ENCODE measurements at regions of chr11 and their contacts with region 1.

Region 1: GRCh38 chr11:86456052-86456939 is 81.6 kb downstream of the CCDC81 start:
- DNase-seq: peak; percentile 56
- H3K4me3 Mint-ChIP-seq: no peak overlapping the region
- H3K27ac Mint-ChIP-seq: no peak overlapping the region
- H3K4me1 Mint-ChIP-seq: peaks cover 27% of the 10 kb centered on the region
- H3K27me3 Mint-ChIP-seq: no peaks in the 10 kb centered on the region

Region 2: GRCh38 chr11:85854557-85855340 is 601.5 kb before region 1 on chr11:
- intact Hi-C with region 1: loop called (anchors 2 kb)
- DNase-seq: peak; percentile 87
- H3K4me3 Mint-ChIP-seq: peak overlapping the region; percentile 84
- H3K27ac Mint-ChIP-seq: peak overlapping the region; percentile 90
- H3K4me1 Mint-ChIP-seq: peaks cover 13% of the 10 kb centered on the region
- H3K27me3 Mint-ChIP-seq: peaks cover 3% of the 10 kb centered on the region

Region 3: DNA sequence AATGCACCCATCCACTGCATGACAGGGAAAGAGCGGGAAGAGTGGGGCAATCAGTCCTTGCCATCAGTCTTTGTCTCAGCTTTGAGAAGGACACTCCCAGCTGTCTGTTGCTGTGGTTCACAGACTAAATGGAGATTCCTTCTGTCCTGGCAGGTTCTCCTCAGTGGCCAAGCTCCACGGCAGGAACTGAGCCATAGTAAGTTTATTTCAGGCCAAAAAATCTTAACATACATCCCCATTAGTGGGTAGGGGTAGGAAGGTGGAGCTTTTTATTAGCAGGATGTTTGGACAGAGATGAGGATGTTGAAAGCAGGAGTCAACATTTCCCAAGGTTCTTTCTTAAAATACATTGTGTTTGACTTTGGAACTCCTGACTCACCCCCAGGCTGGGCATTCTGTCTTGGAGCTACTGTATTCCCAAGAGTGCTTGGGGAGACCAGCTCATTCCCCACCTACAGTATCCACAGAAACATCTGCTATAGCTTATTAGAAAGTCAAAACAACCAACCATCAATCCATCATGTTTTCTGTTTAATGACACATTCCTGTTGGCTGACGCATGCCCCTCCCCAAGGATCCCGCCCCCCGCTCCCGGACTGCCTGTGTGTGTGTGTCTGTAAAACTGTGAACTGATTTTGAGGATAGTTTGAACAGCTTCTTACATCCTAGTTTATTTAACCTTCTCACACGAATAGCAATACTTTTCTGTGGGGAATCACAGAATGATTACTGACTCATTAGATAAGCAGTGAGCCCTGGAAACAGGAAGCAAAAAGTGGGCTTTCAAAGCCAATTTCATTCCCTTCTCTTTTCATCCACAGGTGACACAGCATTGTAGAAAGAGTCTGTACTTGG is 27.9 kb after region 1 on chr11:
- intact Hi-C with region 1: no loop called
- DNase-seq: no peak
- H3K4me3 Mint-ChIP-seq: no peak overlapping the region
- H3K27ac Mint-ChIP-seq: no peak overlapping the region
- H3K4me1 Mint-ChIP-seq: peaks cover 4% of the 10 kb centered on the region
- H3K27me3 Mint-ChIP-seq: peaks cover 2% of the 10 kb centered on the region

Region 4: DNA sequence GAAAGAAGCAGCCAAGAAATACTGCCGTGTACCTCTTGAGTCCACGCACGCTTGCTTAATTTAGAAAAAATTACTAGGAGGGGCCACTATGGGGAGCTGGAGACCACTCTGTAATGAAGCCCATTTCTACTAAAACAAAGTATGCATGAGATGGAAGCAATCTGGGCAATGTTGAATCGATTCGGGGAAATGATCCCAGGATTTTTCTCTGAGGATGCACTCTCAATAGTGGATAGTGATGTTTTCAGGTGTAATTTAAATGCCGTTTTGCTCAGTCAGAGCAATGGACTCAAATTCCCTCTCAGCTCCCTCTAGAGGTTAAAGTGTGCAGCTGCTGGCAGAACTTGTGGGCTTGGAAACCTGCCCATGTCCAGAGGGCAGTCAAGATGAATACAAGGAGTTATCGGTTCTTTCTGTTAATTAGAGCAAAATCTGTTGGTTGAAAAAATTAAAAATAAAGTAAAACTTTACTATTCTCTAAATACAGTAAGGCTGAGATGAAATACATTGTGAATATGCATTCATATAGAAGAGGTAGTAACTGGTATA is 152.0 kb after region 1 on chr11:
- intact Hi-C with region 1: loop called (anchors 1 kb)
- DNase-seq: no peak
- H3K4me3 Mint-ChIP-seq: no peak overlapping the region
- H3K27ac Mint-ChIP-seq: no peak overlapping the region
- H3K4me1 Mint-ChIP-seq: peaks cover 8% of the 10 kb centered on the region
- H3K27me3 Mint-ChIP-seq: no peaks in the 10 kb centered on the region

Region 5: DNA sequence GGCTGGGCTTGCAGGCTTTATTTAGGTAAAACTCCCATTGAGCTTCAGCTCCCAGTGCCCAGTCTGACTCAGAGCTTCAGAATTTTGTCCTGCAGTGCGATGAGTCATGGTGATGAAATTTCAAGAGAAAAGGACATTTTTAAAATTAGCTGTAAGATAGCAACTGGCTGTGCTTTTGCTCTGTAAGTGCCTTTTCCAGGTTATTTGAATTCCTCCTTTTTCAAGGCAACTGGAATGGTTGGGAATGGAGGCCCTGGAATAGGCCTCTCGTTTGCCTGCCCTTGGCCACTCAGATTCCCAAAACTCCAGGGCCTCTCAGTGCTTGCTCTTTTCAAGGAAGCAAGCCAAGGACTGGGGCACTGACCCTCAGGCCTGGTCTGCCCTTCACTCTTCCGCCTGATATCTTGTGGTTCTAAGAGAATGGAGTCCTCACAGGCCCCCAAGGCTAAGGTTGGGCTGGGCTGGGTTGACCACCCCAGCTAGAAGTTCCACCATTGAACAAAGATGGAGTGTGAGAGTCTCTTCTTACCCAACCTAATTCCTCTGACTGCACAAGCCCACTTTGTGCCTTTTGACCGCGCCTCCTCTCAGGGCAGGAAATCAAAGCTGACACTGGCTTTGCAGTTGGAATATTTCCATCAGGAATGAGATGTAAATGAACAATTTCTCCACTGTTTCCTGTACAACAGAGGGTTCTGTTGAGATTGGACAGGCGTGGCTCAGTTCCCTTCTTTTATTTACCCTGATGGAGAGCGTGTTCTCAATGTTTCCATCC is 284.6 kb after region 1 on chr11:
- intact Hi-C with region 1: loop called (anchors 5 kb)
- DNase-seq: no peak
- H3K4me3 Mint-ChIP-seq: no peak overlapping the region
- H3K27ac Mint-ChIP-seq: no peak overlapping the region
- H3K4me1 Mint-ChIP-seq: peaks cover 27% of the 10 kb centered on the region
- H3K27me3 Mint-ChIP-seq: no peaks in the 10 kb centered on the region

Region 6: GRCh38 chr11:86919557-86920210 is 463.4 kb after region 1 on chr11:
- intact Hi-C with region 1: loop called (anchors 5 kb)
- DNase-seq: no peak
- H3K4me3 Mint-ChIP-seq: no peak overlapping the region
- H3K27ac Mint-ChIP-seq: no peak overlapping the region
- H3K4me1 Mint-ChIP-seq: no peaks in the 10 kb centered on the region
- H3K27me3 Mint-ChIP-seq: peaks cover 10% of the 10 kb centered on the region

Measured in activated T-helper 2 cell treated with anti-CD3 and anti-CD28 coated beads, Interferon-gamma antibody, Interleukin-2, Interleukin-4, amounts not matched to agents 10 μg/mL and 5 μg/mL and 100 μg/mL, durations not matched to agents 14 hours and 24 hours and 36 hours (primary cell).